Posterior vena cava (tissue), 2 donors: ENCODE measurements at regions of chr1 and their contacts with region 1.

Region 1: GRCh38 chr1:236947794-236948193 is 56.4 kb downstream of the MT1HL1 start:
- DNase-seq: no peak

Region 2: GRCh38 chr1:236997882-236998281 is 50.1 kb after region 1 on chr1:
- intact Hi-C with region 1: no loop called
- DNase-seq: no peak

Region 3: DNA sequence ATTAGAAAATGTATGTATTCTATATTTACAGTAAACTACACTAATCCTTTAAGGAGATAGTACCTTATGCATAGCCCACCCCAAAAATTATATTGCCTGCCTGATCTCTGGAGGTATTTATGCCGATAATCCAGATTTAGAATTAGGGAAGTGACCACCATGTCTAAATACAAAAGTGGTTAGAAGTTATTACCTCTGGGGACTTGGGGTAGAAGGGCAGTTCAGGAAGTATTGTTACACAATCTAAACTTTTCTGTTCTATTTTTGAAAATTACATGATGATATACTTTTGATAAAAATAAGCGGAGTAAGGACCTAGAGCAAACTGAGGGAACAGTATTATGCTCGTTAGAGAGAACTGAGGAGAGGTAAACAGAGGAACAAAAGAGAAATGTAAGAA is 1033.4 kb after region 1 on chr1:
- intact Hi-C with region 1: loop called in 1 of 2 experiments (anchors 5 kb)
- DNase-seq: no peak